B cell (primary cell): ENCODE measurements at regions of chr17 and their contacts with region 1.

Region 1: DNA sequence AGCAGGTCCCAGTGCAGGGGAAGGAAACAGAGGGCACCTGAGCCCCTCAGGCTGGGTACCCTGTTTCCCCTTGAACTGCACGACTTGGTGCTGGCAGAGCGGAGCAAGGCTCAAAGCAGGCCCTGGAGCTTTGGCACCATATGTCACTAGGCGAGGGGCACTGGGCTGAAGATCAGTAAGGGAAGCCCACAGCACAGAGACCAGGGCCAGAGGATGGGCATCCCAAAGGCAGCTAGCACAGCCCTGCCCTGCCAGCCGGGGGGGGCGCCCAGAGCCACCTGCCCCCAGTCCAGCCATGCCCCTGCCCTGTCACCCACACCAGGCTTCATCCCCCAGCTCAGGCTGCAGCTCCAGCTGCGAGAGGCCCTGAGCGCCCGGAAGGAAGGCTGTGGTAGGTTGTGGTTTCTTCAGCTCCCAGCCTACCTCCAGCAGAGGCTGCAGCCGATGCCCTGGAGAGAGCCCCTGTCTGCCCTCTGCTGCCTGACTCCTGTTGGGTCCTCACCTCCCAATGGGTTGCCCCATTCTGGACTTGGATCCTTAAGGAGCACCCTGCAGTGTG is 10.9 kb downstream of the NHERF1 start:
- DNase-seq: peak; percentile 63
- ATAC-seq: peak; percentile 77
- H3K4me3 ChIP-seq: no peak overlapping the region
- H3K4me3 Mint-ChIP-seq: peak overlapping the region; percentile 56
- H3K27ac ChIP-seq: no peak overlapping the region
- H3K27ac Mint-ChIP-seq: peak overlapping the region; percentile 29
- H3K4me1 ChIP-seq: peaks cover 40 to 52% of the 10 kb centered on the region in 2 donors
- H3K4me1 Mint-ChIP-seq: peaks cover 46% of the 10 kb centered on the region
- H3K27me3 ChIP-seq: no peaks in the 10 kb centered on the region
- H3K27me3 Mint-ChIP-seq: no peaks in the 10 kb centered on the region
- CTCF ChIP-seq: no peak

Region 2: GRCh38 chr17:73998653-73999645 is 760.4 kb before region 1 on chr17:
- CTCF ChIA-PET with region 1: no interaction called
- POLR2A ChIA-PET with region 1: no interaction called
- intact Hi-C with region 1: no loop called
- DNase-seq: peak; percentile 53
- ATAC-seq: peak; percentile 70
- H3K4me3 ChIP-seq: no peak overlapping the region
- H3K4me3 Mint-ChIP-seq: no peak overlapping the region
- H3K27ac ChIP-seq: no peak overlapping the region
- H3K27ac Mint-ChIP-seq: no peak overlapping the region
- H3K4me1 ChIP-seq: no peaks in the 10 kb centered on the region
- H3K4me1 Mint-ChIP-seq: no peaks in the 10 kb centered on the region
- H3K27me3 ChIP-seq: peaks cover 0 to 4% (median 0%) of the 10 kb centered on the region in 4 experiments
- H3K27me3 Mint-ChIP-seq: peaks cover 28% of the 10 kb centered on the region
- CTCF ChIP-seq: peak; percentile 83

Region 3: GRCh38 chr17:74654742-74655141 is 104.6 kb before region 1 on chr17:
- CTCF ChIA-PET with region 1: interaction called, 40 read pairs
- POLR2A ChIA-PET with region 1: no interaction called
- intact Hi-C with region 1: loop called (anchors 1 kb)
- DNase-seq: no peak
- ATAC-seq: no peak
- H3K4me3 ChIP-seq: no peak overlapping the region
- H3K4me3 Mint-ChIP-seq: no peak overlapping the region
- H3K27ac ChIP-seq: no peak overlapping the region
- H3K27ac Mint-ChIP-seq: no peak overlapping the region
- H3K4me1 ChIP-seq: peaks cover 3 to 5% of the 10 kb centered on the region in 2 donors
- H3K4me1 Mint-ChIP-seq: peaks cover 6% of the 10 kb centered on the region
- H3K27me3 ChIP-seq: peaks cover 0 to 20% (median 6%) of the 10 kb centered on the region in 4 experiments
- H3K27me3 Mint-ChIP-seq: peaks cover 56% of the 10 kb centered on the region
- CTCF ChIP-seq: no peak

Region 4: GRCh38 chr17:74770498-74771318 is 11.4 kb after region 1 on chr17:
- CTCF ChIA-PET with region 1: interaction called, 57 read pairs
- POLR2A ChIA-PET with region 1: interaction called, 3 read pairs
- intact Hi-C with region 1: no loop called
- DNase-seq: peak; percentile 78
- ATAC-seq: peak; percentile 94
- H3K4me3 ChIP-seq: no peak overlapping the region
- H3K4me3 Mint-ChIP-seq: no peak overlapping the region
- H3K27ac ChIP-seq: no peak overlapping the region
- H3K27ac Mint-ChIP-seq: peak overlapping the region; percentile 50
- H3K4me1 ChIP-seq: peaks cover 6 to 7% of the 10 kb centered on the region in 2 donors
- H3K4me1 Mint-ChIP-seq: peaks cover 17% of the 10 kb centered on the region
- H3K27me3 ChIP-seq: no peaks in the 10 kb centered on the region
- H3K27me3 Mint-ChIP-seq: no peaks in the 10 kb centered on the region
- CTCF ChIP-seq: peak; percentile 75